Naive thymus-derived CD4-positive, alpha-beta T cell (primary cell): ENCODE measurements at regions of chr2 and their contacts with region 1.

Region 1: GRCh38 chr2:70948337-70949003 is 12.8 kb downstream of the ATP6V1B1 start:
- DNase-seq: peak; percentile 52 to 78 (median 70)
- ATAC-seq: peak; percentile 96
- H3K4me3 ChIP-seq: no peak overlapping the region
- H3K4me3 Mint-ChIP-seq: peak overlapping the region; percentile 73 to 96 (median 84)
- H3K27ac ChIP-seq: no peak overlapping the region
- H3K27ac Mint-ChIP-seq: peak overlapping the region in 2 of 9 donors; percentile 53 to 71
- H3K4me1 ChIP-seq: peaks cover 0 to 4% of the 10 kb centered on the region in 2 donors
- H3K4me1 Mint-ChIP-seq: peaks cover 10 to 18% (median 14%) of the 10 kb centered on the region in 7 donors
- H3K27me3 ChIP-seq: no peaks in the 10 kb centered on the region
- H3K27me3 Mint-ChIP-seq: peaks cover under 1 to 29% (median 23%) of the 10 kb centered on the region in 5 donors

Region 2: DNA sequence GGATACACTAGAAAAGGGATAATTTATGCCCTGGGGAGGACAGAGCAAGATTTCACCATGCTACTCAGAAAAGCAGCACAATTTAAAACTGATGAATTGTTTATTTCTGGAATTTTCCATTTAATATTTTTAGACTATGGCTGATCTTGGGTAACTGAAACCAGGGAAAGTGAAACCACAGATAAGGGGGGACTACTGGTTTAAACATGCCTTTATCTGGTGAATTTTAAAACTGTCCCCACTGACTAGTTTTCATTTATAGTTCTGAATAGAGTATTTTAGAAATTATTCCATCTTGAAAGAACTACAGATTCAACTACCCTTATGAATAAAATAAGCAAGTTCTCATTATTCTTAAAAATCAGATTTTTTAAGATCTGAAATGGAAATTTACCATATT is 1526.3 kb before region 1 on chr2:
- CTCF ChIA-PET with region 1: no interaction called
- POLR2A ChIA-PET with region 1: no interaction called
- intact Hi-C with region 1: no loop called
- DNase-seq: no peak
- ATAC-seq: no peak
- H3K4me3 ChIP-seq: no peak overlapping the region
- H3K4me3 Mint-ChIP-seq: no peak overlapping the region
- H3K27ac ChIP-seq: no peak overlapping the region
- H3K27ac Mint-ChIP-seq: peak overlapping the region in 2 of 9 donors; percentile 43 to 76
- H3K4me1 ChIP-seq: no peaks in the 10 kb centered on the region
- H3K4me1 Mint-ChIP-seq: no peaks in the 10 kb centered on the region
- H3K27me3 ChIP-seq: no peaks in the 10 kb centered on the region
- H3K27me3 Mint-ChIP-seq: no peaks in the 10 kb centered on the region

Region 3: DNA sequence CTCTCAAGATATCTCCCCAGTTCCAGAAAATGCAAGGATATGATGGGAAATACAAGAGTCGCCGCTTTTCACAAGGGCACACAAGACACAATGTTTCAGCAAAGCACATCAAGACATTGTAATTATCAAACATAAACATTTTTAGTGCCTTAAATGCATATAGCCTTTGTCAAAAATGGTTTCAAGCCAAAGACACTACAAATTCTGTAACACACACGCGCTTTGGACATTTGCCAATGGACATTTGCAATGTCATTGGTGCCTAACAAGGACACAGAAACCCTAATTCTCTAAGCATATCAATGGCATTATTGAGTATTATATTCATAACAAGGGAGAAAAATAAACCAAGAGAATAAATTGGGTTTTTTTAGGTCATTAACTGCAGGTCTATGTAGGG is 196.6 kb before region 1 on chr2:
- CTCF ChIA-PET with region 1: no interaction called
- POLR2A ChIA-PET with region 1: no interaction called
- intact Hi-C with region 1: no loop called
- DNase-seq: no peak
- ATAC-seq: no peak
- H3K4me3 ChIP-seq: no peak overlapping the region
- H3K4me3 Mint-ChIP-seq: no peak overlapping the region
- H3K27ac ChIP-seq: no peak overlapping the region
- H3K27ac Mint-ChIP-seq: no peak overlapping the region
- H3K4me1 ChIP-seq: no peaks in the 10 kb centered on the region
- H3K4me1 Mint-ChIP-seq: peaks cover 0 to 18% (median 6%) of the 10 kb centered on the region in 7 donors
- H3K27me3 ChIP-seq: peaks cover 0 to 2% of the 10 kb centered on the region in 2 donors
- H3K27me3 Mint-ChIP-seq: peaks cover 0 to 5% (median 3%) of the 10 kb centered on the region in 5 donors

Region 4: GRCh38 chr2:70779911-70780545 is 168.4 kb before region 1 on chr2:
- CTCF ChIA-PET with region 1: no interaction called
- POLR2A ChIA-PET with region 1: no interaction called
- intact Hi-C with region 1: no loop called
- DNase-seq: no peak
- ATAC-seq: no peak
- H3K4me3 ChIP-seq: no peak overlapping the region
- H3K4me3 Mint-ChIP-seq: no peak overlapping the region
- H3K27ac ChIP-seq: no peak overlapping the region
- H3K27ac Mint-ChIP-seq: no peak overlapping the region
- H3K4me1 ChIP-seq: no peaks in the 10 kb centered on the region
- H3K4me1 Mint-ChIP-seq: peaks cover 0 to under 1% (median 0%) of the 10 kb centered on the region in 7 donors
- H3K27me3 ChIP-seq: no peaks in the 10 kb centered on the region
- H3K27me3 Mint-ChIP-seq: peaks cover 0 to 26% (median 11%) of the 10 kb centered on the region in 5 donors

Region 5: GRCh38 chr2:70861777-70862625 is 86.5 kb before region 1 on chr2:
- CTCF ChIA-PET with region 1: interaction called, 3 read pairs
- POLR2A ChIA-PET with region 1: no interaction called
- intact Hi-C with region 1: loop called (anchors 1 to 2 kb)
- DNase-seq: peak; percentile 45 to 80 (median 66)
- ATAC-seq: peak; percentile 94
- H3K4me3 ChIP-seq: no peak overlapping the region
- H3K4me3 Mint-ChIP-seq: peak overlapping the region in 3 of 10 donors; percentile 24 to 57 (median 49)
- H3K27ac ChIP-seq: no peak overlapping the region
- H3K27ac Mint-ChIP-seq: no peak overlapping the region
- H3K4me1 ChIP-seq: no peaks in the 10 kb centered on the region
- H3K4me1 Mint-ChIP-seq: peaks cover 0 to 6% (median 4%) of the 10 kb centered on the region in 7 donors
- H3K27me3 ChIP-seq: no peaks in the 10 kb centered on the region
- H3K27me3 Mint-ChIP-seq: peaks cover 22 to 54% (median 29%) of the 10 kb centered on the region in 5 donors

Region 6: DNA sequence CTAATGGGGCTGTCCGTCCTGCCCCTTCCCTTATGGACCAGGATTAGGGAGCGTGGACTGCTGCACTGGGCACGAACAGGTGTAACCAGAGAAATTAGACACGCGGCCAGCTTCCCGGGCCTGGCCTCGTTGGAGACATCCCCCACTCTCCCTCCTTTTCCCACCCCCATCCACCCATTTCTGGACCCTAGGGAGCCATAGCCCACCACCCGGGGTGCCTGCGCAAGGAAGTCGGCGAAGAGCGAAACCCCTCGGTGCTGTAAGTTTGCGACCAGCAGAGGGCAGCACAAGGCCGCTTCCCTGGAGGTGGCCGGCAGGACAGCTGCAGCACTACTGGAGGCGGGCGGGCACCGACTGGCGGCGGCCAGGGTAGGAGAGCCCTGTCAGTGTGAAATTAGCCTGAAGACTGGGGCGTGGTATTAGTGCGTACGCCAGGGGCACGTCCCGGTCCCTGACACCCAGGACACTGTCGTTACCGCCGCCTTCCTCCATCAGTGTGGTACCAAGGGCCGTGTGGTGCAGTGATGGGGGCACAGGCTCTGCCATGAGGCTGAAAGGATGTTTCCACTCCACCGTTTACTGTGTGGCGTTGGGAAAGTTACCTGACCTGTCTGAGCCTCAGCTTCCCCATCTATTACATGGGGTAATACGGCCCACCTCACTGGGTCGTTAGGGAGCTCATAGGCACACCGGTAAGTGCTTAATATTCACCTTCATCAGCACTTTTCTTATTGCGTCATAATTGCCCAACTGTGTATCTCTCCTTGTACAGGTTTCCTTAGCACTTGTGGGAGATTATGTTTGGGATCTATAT is 76.9 kb before region 1 on chr2:
- CTCF ChIA-PET with region 1: interaction called, 16 read pairs
- POLR2A ChIA-PET with region 1: no interaction called
- intact Hi-C with region 1: loop called (anchors 1 kb)
- DNase-seq: peak; percentile 38 to 83 (median 69)
- ATAC-seq: peak; percentile 98
- H3K4me3 ChIP-seq: peak overlapping the region; percentile 23
- H3K4me3 Mint-ChIP-seq: peak overlapping the region in 8 of 10 donors; percentile 37 to 74 (median 52)
- H3K27ac ChIP-seq: no peak overlapping the region
- H3K27ac Mint-ChIP-seq: no peak overlapping the region
- H3K4me1 ChIP-seq: peaks cover 8 to 9% of the 10 kb centered on the region in 2 donors
- H3K4me1 Mint-ChIP-seq: peaks cover 0 to 7% (median 4%) of the 10 kb centered on the region in 7 donors
- H3K27me3 ChIP-seq: peaks cover 5 to 14% of the 10 kb centered on the region in 2 donors
- H3K27me3 Mint-ChIP-seq: peaks cover 31 to 46% (median 44%) of the 10 kb centered on the region in 5 donors